Cardiac septum (tissue), 1 donor: ENCODE measurements at regions of chr2 and their contacts with region 1.

Region 1: DNA sequence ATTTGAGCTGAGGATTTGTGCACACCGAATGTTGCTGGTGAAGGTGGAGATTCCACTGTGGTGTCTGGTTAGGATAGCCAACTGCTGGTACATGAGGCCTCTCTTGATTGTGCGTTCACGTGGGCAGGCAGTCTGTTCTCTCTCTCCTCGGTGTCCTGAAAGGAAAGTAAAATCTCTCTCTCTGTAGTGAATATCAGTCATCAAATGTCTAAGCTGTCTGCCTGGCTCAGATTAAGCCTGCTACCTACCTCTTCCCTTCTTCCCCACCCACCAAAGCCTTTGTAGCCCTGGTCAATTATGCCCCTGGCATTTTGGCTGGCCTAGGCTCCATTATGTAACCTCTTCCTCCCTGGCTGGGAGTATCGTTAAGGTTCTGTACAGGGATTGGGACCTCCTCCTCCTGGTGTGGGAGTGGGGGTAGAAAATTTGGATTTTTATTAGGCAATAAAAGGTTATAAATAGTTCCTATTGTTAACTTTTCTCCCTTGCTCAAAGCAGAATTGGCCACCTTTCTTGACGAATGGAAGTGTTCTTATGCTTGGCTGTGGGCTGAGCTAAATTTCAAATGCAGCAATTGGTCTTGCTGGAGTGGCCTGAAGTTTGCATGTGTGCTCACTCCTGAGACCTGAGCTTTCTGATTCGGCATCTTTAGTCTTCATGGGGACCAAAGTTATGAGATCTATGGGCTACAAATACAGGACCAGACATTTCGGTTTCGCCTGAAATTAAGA is 148.8 kb downstream of the WDSUB1 start:
- DNase-seq: no peak

Region 2: GRCh38 chr2:159164457-159164911 is 26.8 kb after region 1 on chr2:
- intact Hi-C with region 1: loop called (anchors 2 kb)
- DNase-seq: no peak